ENCODE measurements at regions of chr13 and their contacts with region 1.

Region 1: GRCh38 chr13:111474136-111475002 is 153.9 kb downstream of the TEX29 start:
- DNase-seq: no peak
- ATAC-seq: peak; percentile 42

Region 2: DNA sequence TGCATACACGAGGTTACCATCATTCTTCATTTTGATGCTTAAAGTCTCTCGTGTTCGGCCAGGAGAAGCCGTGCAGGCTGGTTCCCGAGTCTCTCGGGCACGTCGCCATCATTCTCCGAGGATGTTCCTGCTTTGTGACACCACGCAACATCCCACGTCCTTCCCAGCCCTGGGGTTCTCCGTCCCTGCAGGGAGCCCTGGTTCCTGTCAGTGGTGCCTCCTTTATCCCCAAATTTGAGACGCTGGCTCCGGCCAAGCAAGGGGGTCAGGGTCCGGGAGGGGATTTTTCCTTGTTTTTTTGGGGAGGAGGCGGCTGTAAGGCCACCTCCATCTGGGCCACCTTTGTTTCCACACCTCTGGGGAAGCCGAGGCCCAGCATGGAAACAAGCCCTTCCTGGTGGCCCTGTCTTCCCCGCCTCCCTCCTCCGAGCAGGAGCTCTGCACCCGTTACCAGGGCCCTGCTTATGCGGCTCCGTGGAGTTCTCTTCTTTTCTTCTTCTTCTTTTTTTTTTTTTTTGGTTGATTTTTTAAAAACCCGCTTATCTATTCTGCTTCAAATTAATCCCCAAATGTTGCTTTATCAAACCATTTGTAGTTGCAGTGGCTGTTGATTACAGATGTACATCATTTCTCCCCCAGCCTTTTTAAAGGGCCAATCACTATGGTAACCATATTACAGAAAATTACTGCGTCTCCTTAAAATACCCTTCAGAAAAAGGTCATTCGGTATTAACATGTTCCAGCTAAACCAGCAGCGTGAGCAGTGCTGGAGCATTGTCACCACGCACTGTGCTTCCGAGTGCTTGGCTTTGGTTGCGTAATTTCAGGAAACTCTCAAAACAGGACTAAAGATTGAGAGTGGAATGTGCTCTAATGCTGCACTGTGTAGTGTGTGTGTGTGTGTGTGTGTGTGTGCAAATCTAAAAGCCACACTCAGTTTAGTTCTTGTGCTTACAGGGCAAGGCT is 103.5 kb before region 1 on chr13:
- intact Hi-C with region 1: no loop called
- DNase-seq: no peak
- ATAC-seq: no peak

Region 3: GRCh38 chr13:111572956-111573761 is 98.8 kb after region 1 on chr13:
- intact Hi-C with region 1: no loop called
- DNase-seq: no peak
- ATAC-seq: no peak

Region 4: DNA sequence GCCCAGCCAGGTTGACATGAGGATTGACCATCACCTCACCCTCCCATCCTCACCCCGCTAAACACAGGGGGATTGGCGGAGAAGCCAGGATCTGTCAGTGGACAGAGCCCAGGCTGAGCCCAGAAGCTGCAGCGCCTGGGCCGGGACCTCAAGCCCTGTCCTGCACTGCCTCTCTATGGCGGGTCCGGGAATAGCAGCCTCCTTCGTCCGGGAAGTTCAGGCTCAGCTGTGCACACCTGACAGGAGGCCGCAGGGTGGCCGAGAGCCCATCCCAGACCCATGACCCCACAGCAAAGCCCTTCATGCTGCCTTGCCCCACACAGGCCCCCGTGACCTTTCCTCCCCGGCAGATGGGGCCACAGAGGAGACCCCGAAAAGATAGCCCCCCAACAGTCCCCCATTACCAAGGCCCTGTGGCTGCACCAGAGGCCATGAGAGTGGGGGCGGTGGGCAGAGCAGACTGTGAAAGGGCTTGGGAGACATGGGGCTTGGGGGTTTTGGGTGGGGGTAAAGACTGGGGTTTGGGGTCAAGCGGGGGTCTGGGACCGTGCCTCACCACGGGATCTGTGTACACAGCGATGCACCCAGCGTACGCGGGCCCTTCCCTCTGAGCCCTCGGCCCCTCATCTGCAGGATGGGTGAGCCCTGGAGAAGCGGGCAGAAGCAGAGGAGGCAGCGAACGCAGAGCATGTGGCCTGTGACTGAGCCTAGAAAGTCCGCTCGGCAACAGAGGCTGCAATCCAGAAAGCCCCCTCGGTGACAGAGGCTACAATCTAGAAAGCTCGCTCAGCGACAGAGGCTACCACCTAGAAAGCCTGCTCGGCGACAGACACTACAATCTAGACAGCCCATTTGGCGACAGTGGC is 969.9 kb after region 1 on chr13:
- intact Hi-C with region 1: loop called (anchors 1 kb)
- DNase-seq: no peak
- ATAC-seq: peak; percentile 78

Region 5: GRCh38 chr13:112606109-112607001 is 1132.0 kb after region 1 on chr13:
- intact Hi-C with region 1: loop called (anchors 5 kb)
- DNase-seq: peak; percentile 97
- ATAC-seq: peak; percentile 100

Measured in Right ventricle myocardium inferior (tissue), 1 donor.